ENCODE measurements at regions of chr4 and their contacts with region 1.

Region 1: DNA sequence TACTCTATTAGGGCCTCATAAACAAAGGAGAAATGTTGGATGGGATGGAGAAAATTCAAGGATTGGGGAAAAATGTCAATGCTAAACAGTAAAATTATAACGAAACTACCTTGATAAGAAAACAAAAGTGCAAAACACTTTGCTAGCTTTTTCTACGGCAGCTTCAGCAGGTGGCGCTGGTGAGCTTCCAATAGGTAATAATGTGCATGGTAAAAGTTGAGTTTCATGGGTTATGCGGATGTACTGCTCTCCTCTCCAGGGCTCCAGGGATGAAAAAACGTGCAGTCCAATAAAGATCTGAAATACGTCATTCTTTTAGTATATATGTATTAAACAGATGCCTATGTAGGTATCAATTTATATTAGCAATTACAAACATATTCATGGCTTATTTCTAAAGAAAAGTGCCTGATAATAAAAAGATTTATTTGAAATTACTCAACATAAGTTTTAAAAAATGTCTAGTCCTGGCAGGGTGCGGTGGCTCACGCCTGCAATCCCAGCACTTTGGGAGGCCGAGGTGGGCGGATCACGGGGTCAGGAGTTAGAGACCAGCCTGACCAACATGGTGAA is 239.6 kb downstream of the GRXCR1 start:
- DNase-seq: peak in 1 of 2 donors; percentile 15
- ATAC-seq: no peak
- H3K4me3 ChIP-seq: no peak overlapping the region
- H3K27ac ChIP-seq: no peak overlapping the region
- H3K4me1 ChIP-seq: no peaks in the 10 kb centered on the region
- H3K27me3 ChIP-seq: no peaks in the 10 kb centered on the region
- CTCF ChIP-seq: peak; percentile 48

Region 2: GRCh38 chr4:44425614-44426208 is 1293.6 kb after region 1 on chr4:
- intact Hi-C with region 1: loop called in 1 of 2 experiments (anchors 10 kb)
- DNase-seq: no peak
- ATAC-seq: peak in 2 of 4 donors; percentile 64 to 67
- H3K4me3 ChIP-seq: no peak overlapping the region
- H3K27ac ChIP-seq: no peak overlapping the region
- H3K4me1 ChIP-seq: no peaks in the 10 kb centered on the region
- H3K27me3 ChIP-seq: no peaks in the 10 kb centered on the region
- CTCF ChIP-seq: peak; percentile 52

Region 3: GRCh38 chr4:44629280-44629866 is 1497.3 kb after region 1 on chr4:
- intact Hi-C with region 1: loop called in 1 of 2 experiments (anchors 10 kb)
- DNase-seq: no peak
- ATAC-seq: peak; percentile 68 to 91 (median 84)
- H3K4me3 ChIP-seq: no peak overlapping the region
- H3K27ac ChIP-seq: no peak overlapping the region
- H3K4me1 ChIP-seq: no peaks in the 10 kb centered on the region
- H3K27me3 ChIP-seq: no peaks in the 10 kb centered on the region
- CTCF ChIP-seq: peak; percentile 72

Measured in psoas muscle (tissue), 8 donors.